Posterior cingulate gyrus (tissue), 11 donors: ENCODE measurements at regions of chr10 and their contacts with region 1.

Region 1: DNA sequence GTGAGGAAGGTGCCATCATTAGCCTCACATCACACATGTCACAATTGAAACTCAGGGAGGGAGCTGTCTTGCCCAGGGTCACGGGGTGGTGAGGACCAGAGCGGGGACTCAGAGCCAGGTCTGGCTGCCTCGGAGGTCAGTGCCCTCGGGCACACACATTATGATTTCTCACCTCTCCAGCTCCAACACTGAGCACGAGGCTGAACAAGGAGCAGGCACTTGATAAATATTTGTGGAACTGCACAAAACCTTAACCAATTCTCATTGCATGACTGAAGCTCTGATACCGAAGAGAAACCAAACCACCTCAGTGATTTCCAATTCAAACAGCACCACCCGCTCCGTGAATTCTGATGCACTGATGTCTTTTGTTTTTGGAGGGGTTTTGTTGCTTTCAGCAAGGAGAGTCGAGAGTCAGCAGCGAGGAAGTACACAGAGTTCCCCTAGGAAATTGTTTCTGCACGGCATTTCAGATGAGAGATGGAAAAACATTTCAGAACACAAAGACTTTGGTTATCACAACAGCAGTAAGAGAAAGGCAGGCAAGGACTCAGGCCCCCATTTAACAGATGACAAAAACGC is 55.3 kb upstream of the ZMIZ1 start:
- DNase-seq: peak in 3 of 10 donors; percentile 6 to 72 (median 37)

Region 2: DNA sequence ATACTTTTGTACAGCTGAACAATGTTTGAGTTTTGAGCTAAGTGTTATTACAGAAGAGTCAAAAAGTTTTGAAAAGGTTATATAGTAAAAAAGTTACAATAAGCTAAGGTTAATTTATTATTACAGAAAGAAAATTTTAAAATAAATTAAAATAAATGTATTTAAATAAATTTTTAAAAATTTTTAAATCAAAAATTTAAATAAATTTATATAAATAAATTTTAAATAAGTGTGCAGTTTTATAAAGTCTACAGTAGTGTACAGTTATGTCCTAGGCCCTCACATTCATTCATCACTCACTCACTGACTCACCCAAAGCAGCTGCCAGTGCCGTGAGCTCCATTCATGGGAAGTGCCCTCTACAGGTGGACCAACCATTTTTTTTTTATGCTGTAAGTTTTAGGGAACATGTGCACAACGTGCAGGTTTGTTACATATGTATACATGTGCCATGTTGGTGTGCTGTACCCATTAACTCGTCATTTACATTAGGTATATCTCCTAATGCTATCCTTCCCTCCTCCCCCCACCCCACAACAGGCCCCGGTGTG is 407.6 kb before region 1 on chr10:
- intact Hi-C with region 1: no loop called
- DNase-seq: no peak

Region 3: GRCh38 chr10:78899996-78900714 is 113.3 kb before region 1 on chr10:
- intact Hi-C with region 1: no loop called
- DNase-seq: peak in 1 of 10 donors; percentile 73

Region 4: DNA sequence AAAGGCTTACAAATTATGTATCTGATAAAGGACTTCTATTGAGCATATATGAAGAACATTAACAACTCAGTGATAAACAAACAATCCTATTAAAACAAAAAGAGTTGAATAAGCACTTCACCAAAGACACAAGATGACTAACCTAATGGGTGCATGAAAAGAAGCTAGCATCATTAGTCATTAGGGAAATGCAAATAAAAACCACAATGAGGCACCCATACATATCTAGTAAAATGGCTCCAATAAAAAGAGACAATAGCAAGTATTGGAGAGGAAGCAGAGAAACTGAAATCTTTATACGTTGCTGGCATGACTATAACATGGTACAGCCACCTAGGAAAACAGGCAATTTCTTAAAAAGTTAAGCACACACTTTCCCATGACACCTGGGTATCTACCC is 22.3 kb before region 1 on chr10:
- intact Hi-C with region 1: loop called (anchors 1 kb)
- DNase-seq: no peak